ENCODE measurements at regions of chr5 and their contacts with region 1.

Region 1: GRCh38 chr5:65481635-65482295 is at the start of gene ADAMTS6:
- DNase-seq: peak; percentile 100
- H3K4me3 ChIP-seq: peak within 1 kb of the TSS; percentile 99
- H3K27ac ChIP-seq: peak within 1 kb of the TSS; percentile 96
- H3K4me1 ChIP-seq: peaks cover 32% of the 10 kb centered on the region
- H3K27me3 ChIP-seq: no peaks in the 10 kb centered on the region
- total RNA-seq, gene ADAMTS6: 62.5 and 76.0 TPM in 2 replicates

Region 2: DNA sequence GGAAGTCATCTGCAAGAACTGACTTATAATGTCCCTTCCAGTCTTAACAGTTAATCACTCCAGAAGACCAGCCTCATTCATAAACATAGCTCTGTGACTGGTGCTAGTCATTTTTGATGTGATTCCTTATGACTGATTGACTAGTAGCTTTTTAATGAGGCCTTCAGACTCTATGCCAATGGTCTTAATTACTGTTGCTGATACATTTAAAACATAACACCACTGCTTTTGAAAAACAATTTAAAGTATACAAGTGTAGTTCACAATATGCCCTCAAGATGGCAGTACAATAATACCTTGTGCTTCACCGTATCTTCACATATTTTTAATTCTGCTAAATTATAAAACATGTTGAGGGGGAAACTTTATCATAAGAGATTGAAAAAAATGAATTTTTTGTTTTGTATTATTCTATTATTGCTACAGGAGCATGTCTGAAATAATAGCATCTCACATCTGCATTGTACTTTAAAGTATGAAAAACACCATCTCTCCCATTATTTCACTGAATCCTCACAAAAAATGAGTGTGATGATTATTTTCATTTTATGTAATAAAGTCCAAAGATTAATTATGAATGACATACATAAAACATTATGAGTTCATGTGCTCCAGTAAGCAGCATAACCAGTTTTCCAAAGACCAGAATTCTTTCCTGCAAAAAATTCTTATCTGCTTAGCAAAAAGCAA is 846.6 kb before region 1 on chr5:
- in situ Hi-C with region 1: loop called (anchors 25 kb)
- DNase-seq: peak; percentile 31
- H3K4me3 ChIP-seq: no peak overlapping the region
- H3K27ac ChIP-seq: no peak overlapping the region
- H3K4me1 ChIP-seq: peaks cover 4% of the 10 kb centered on the region
- H3K27me3 ChIP-seq: peaks cover 12% of the 10 kb centered on the region

Region 3: DNA sequence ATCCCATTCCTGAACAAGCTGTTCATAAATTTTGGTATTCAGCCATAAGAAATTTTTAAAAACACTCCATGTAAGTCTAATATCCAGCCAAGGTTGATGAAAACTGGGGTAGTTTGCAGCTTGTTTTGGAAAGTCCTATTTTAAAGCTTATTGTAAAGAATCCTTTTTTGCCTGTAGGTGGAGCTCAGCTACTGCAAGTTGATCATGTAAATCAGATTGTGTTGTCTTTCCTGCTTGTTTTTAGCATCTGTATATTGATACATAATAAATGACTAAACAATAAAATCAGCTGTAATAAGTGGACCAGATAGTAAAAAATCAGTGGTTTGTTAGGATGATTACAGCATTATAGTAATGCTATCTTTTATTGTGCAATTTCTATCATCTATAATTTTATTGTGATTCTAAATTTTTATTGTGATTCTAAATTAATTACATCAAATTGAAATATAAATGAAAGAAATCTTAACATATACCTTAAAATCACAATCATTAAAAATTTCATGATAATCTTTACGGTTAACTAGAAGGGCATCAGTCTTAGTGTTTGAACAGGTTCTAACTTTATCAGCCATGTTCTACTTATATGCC is 670.6 kb before region 1 on chr5:
- in situ Hi-C with region 1: loop called (anchors 5 kb)
- DNase-seq: peak; percentile 77
- H3K4me3 ChIP-seq: no peak overlapping the region
- H3K27ac ChIP-seq: no peak overlapping the region
- H3K4me1 ChIP-seq: peaks cover 21% of the 10 kb centered on the region
- H3K27me3 ChIP-seq: no peaks in the 10 kb centered on the region

Region 4: GRCh38 chr5:64965613-64966012 is 516.2 kb before region 1 on chr5:
- in situ Hi-C with region 1: loop called (anchors 10 kb)
- DNase-seq: no peak
- H3K4me3 ChIP-seq: no peak overlapping the region
- H3K27ac ChIP-seq: no peak overlapping the region
- H3K4me1 ChIP-seq: no peaks in the 10 kb centered on the region
- H3K27me3 ChIP-seq: no peaks in the 10 kb centered on the region

Region 5: GRCh38 chr5:65098393-65098792 is 383.4 kb before region 1 on chr5:
- in situ Hi-C with region 1: loop called (anchors 10 kb)
- DNase-seq: no peak
- H3K4me3 ChIP-seq: no peak overlapping the region
- H3K27ac ChIP-seq: no peak overlapping the region
- H3K4me1 ChIP-seq: peaks cover 3% of the 10 kb centered on the region
- H3K27me3 ChIP-seq: no peaks in the 10 kb centered on the region

Region 6: GRCh38 chr5:65682148-65682547 is 200.4 kb after region 1 on chr5:
- in situ Hi-C with region 1: no loop called
- DNase-seq: no peak
- H3K4me3 ChIP-seq: no peak overlapping the region
- H3K27ac ChIP-seq: no peak overlapping the region
- H3K4me1 ChIP-seq: no peaks in the 10 kb centered on the region
- H3K27me3 ChIP-seq: no peaks in the 10 kb centered on the region

Region 7: DNA sequence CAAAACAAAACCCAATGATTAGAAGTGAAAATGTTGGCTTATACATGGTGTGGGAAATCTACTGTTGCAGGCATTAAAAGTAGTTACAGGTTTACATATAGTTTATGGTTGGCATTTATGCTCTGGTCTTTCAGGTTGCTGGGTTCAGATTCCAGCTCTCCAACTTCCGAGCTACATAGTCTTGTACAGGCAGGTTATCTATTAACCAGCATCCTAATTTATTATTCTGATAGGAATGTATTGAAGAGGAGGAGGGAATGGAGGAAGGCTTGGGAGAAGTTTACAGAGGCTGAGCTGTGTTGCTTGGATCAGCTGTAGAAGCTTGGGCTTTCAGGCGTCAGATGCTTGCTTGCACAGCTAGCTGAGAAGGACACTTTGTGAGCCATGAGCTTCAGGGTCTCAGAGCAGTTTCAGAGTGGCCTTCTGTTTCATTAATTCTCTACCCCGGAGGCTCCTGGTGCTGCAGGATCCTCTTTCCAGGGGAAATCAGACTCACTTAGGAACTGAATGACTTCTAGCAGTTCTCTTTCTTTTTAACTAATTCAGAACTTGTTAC is 433.0 kb after region 1 on chr5:
- in situ Hi-C with region 1: no loop called
- DNase-seq: no peak
- H3K4me3 ChIP-seq: no peak overlapping the region
- H3K27ac ChIP-seq: no peak overlapping the region
- H3K4me1 ChIP-seq: peaks cover 4% of the 10 kb centered on the region
- H3K27me3 ChIP-seq: no peaks in the 10 kb centered on the region

Region 8: GRCh38 chr5:67156976-67157583 is 1675.3 kb after region 1 on chr5:
- in situ Hi-C with region 1: no loop called
- DNase-seq: peak; percentile 50
- H3K4me3 ChIP-seq: no peak overlapping the region
- H3K27ac ChIP-seq: no peak overlapping the region
- H3K4me1 ChIP-seq: peaks cover 15% of the 10 kb centered on the region
- H3K27me3 ChIP-seq: no peaks in the 10 kb centered on the region

Measured in GM23248 (cell line).